Activated naive CD4-positive, alpha-beta T cell treated with anti-CD3 and anti-CD28 coated beads for 36 hours (primary cell): ENCODE measurements at regions of chr19 and their contacts with region 1.

Region 1: DNA sequence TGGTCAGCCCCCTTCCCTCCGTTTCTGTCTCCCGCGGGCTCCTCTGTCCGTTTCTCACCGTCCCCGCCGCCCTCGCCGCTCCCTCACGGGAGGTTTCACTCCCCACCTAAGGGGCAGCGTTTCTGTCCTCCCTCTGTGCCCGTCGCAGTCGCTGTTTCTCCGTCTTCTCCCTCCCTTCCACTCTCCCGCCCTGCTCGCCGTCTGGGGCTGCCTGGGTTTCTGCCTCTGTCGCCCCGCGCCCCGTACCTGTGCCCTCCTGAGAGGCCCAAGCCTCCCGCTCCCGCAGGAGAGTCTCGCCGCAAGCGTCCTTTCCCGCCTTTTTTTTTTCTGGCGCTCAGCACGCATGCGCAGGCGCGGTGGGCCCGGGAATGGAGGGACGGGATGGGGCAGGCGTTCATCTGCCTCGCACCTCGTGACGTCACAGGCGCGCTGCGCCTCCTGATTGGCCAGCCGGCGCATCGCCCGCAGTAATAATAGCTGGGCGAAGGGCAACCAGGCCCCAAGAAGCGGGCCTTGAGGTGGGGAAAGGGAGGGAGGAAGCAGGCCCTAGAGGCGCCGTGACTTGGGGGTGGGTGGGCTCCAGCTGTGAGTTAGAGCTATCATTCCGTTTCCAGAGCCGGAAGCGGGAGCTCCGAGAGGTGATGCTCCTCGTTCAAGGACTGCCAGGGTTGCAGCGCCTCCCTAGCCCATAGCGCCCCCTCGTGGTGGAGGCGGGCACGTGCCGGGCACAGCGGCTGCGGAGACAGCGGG is 15.4 kb downstream of the SSC5D start:
- DNase-seq: peak; percentile 90
- H3K4me3 Mint-ChIP-seq: peak overlapping the region; percentile 62
- H3K27ac Mint-ChIP-seq: peak overlapping the region; percentile 40
- H3K4me1 Mint-ChIP-seq: peaks cover 14% of the 10 kb centered on the region
- H3K27me3 Mint-ChIP-seq: no peaks in the 10 kb centered on the region

Region 2: DNA sequence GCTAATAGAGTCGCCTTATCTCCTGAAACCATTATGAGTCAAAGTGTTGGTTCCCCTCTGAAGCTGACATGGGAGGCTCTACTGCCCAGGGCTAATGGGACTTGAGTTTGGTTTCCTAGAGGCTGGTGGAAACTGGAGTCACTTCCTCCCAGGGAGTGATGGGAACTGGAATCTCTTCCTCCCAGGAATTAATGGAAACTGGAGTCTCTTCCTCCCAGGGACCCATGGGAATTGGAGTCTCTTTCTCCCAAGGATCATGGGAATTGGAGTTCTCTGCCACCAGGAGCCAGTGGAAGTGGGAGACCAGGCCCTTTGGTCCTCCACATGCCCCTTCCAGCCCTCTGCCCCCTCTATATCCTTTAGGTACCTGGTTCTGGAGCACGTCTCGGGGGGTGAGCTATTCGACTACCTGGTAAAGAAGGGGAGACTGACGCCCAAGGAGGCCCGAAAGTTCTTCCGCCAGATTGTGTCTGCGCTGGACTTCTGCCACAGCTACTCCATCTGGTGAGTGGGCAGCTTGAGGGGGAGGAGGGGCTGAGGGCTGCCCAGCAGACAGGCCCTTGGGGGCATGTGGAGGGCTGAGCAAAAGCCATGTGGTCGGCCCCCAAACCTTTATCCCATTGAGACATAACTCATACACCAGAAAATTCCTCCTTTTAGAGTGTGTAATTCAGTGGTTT is 214.4 kb before region 1 on chr19:
- CTCF ChIA-PET with region 1: interaction called, 9 read pairs
- intact Hi-C with region 1: loop called (anchors 5 kb)
- DNase-seq: no peak
- H3K4me3 Mint-ChIP-seq: no peak overlapping the region
- H3K27ac Mint-ChIP-seq: no peak overlapping the region
- H3K4me1 Mint-ChIP-seq: peaks cover 4% of the 10 kb centered on the region
- H3K27me3 Mint-ChIP-seq: no peaks in the 10 kb centered on the region

Region 3: DNA sequence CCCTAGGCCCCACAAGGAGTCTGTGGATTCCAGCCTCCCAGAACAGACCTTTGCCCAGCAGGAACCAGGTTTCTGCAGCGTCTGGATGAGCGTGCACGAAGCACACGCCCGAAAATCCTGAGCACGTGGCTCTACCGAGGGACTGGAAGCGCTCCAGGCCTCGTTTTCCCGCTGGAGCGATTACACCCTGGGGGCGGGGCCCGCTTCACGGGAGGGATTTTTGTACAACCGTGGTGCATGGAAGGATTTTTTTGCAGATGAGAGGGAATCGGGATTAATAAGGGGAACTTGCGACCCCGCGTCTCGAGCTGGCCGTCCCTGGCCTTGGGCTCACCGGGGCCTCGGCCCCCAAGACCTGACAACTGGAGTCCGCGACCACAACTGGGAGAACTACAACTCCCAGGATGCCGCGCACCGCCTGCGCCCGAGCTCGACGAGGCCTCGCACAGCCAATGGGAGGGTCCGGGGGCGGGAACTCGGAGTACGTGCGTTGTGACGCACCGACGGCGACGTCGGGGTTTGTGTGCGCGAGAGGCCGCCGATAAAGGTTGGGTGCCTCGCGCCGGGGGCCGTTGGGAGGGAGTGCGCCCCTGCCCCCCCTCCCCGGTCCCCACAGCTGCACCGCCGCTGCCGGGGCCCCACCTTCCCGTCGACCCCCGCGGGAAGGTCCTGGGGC is 27.4 kb before region 1 on chr19 and contains the start of gene ZNF628:
- CTCF ChIA-PET with region 1: interaction called, 20 read pairs
- intact Hi-C with region 1: no loop called
- DNase-seq: peak; percentile 99
- H3K4me3 Mint-ChIP-seq: peak within 1 kb of the TSS; percentile 90
- H3K27ac Mint-ChIP-seq: peak within 1 kb of the TSS; percentile 90
- H3K4me1 Mint-ChIP-seq: peaks cover 30% of the 10 kb centered on the region
- H3K27me3 Mint-ChIP-seq: no peaks in the 10 kb centered on the region
- total RNA-seq, gene ZNF628: 6.0 to 6.1 TPM

Region 4: DNA sequence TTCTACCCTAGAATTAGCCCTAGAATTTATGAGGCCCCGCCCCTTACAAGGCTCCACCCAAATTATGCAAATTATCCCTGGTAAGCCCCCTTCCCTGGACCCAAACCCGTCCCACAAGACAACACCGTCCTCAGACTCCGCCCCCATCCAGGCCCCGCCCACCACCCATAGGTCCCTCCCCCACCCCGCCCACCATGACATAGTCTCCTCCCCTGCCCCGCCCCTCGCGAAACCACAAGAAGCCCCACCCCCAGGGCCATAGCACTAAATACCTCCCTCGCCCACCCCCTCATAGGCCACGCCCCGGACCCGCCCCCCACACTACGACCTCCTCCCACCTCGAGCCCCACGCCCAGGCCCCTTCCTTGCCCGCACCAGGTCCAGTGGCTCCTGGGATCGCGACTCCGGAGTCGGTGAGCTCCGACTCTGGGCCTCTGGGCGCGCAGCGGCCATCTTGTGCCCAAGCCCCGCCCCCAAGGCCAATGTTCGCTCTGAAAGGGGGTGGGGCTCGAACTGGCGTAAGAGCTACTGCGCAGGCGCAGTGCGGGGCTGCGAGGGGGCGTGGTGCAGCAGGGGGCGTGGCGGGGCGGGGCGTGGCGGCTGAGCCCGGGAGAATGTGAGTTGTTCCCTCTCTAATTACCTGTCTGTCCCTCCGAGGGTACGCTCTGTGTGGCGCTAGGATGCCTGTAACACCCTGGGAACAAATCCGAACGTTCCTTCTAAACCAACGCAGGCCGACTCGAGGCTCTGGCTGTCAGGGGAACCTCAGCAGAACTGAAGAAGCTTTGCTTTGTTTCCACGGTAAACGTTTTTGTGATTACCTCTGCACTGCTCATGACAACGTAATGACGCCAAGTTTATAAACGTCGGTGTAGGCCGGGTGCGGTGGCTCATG is 120.7 kb after region 1 on chr19 and contains the start of gene ZNF784:
- CTCF ChIA-PET with region 1: interaction called, 10 read pairs
- intact Hi-C with region 1: no loop called
- DNase-seq: peak; percentile 93
- H3K4me3 Mint-ChIP-seq: peak within 1 kb of the TSS; percentile 92
- H3K27ac Mint-ChIP-seq: peak within 1 kb of the TSS; percentile 95
- H3K4me1 Mint-ChIP-seq: peaks cover 56% of the 10 kb centered on the region
- H3K27me3 Mint-ChIP-seq: no peaks in the 10 kb centered on the region
- total RNA-seq, gene ZNF784: 3.7 to 4.0 TPM